GM13976 (cell line): ENCODE measurements at regions of chr10 and their contacts with region 1.

Region 1: GRCh38 chr10:115417585-115418265 is 324.6 kb downstream of the ATRNL1 start:
- DNase-seq: peak; percentile 41
- CTCF ChIP-seq: peak; percentile 77

Region 2: GRCh38 chr10:115171392-115171960 is 246.2 kb before region 1 on chr10:
- in situ Hi-C with region 1: loop called (anchors 25 kb)
- DNase-seq: no peak
- CTCF ChIP-seq: no peak

Region 3: GRCh38 chr10:115829521-115830205 is 411.9 kb after region 1 on chr10:
- in situ Hi-C with region 1: no loop called
- DNase-seq: no peak
- CTCF ChIP-seq: no peak